Dorsolateral prefrontal cortex (tissue), 120 donors: ENCODE measurements at regions of chr12 and their contacts with region 1.

Region 1: DNA sequence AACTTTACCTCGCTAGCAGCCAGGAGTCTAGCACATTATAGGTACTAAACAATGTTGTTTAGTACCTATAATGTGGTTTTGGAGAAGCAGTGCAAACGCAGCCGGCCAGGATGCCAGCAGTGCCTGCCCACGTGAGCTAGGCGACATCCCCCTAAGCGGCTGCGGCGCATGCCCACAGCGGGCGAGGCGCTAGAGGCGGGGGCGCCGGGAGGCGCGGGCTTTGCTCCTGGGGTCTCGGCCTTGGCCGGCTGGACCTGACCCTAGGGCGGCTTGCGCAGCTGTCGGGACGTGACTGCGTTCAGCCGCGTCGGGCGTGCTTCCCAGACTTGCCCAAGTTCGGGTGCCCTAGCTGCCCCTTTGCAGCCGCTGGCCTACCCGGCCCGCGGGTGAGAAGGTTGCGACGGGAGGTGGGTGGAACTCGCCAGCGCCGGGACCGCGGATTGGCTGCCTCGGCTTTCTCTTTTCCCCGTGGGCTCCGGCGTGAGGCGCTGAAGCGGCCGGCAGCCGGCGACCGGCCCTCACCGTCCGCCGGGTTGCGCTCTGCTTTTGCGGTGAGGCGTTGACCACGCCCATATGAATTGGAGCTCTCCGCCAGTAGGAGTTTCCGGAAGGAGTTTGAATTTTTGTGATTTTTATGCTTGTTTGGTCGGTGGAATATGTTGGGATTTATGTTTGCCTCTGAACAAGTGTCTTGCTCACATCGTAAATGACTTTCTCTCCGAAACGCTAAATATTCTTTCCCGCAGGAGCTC is at the start of gene TMEM19:
- DNase-seq: peak; percentile 80 to 94 (median 90)
- H3K4me3 ChIP-seq: peak within 1 kb of the TSS; percentile 61 to 98 (median 80)
- H3K27ac ChIP-seq: peak within 1 kb of the TSS; percentile 87 to 100 (median 96)
- H3K27me3 ChIP-seq: no peaks in the 10 kb centered on the region
- CTCF ChIP-seq: peak in 44 of 56 donors; percentile 6 to 70 (median 42)
- total RNA-seq, gene TMEM19: 15.3 to 39.6 (median 23.5) TPM

Region 2: GRCh38 chr12:71663561-71664294 is 22.4 kb before region 1 on chr12 and contains the start of gene ZFC3H1:
- intact Hi-C with region 1: loop called (anchors 1 kb)
- DNase-seq: peak; percentile 94 to 99 (median 98)
- H3K4me3 ChIP-seq: peak within 1 kb of the TSS; percentile 59 to 99 (median 92)
- H3K27ac ChIP-seq: peak within 1 kb of the TSS; percentile 92 to 100 (median 98)
- H3K27me3 ChIP-seq: no peaks in the 10 kb centered on the region
- CTCF ChIP-seq: peak in 50 of 56 donors; percentile 25 to 75 (median 49)
- total RNA-seq, gene ZFC3H1: 49.7 to 102 (median 66.9) TPM